ENCODE measurements at regions of chrX and their contacts with region 1.

Region 1: GRCh38 chrX:151396825-151397740 is at the start of gene VMA21:
- DNase-seq: peak; percentile 81
- H3K4me3 Mint-ChIP-seq: peak within 1 kb of the TSS; percentile 87
- H3K27ac Mint-ChIP-seq: peak within 1 kb of the TSS; percentile 96
- H3K4me1 Mint-ChIP-seq: peaks cover 48% of the 10 kb centered on the region
- H3K27me3 Mint-ChIP-seq: no peaks in the 10 kb centered on the region
- total RNA-seq, gene VMA21: 36.5 to 39.7 TPM

Region 2: DNA sequence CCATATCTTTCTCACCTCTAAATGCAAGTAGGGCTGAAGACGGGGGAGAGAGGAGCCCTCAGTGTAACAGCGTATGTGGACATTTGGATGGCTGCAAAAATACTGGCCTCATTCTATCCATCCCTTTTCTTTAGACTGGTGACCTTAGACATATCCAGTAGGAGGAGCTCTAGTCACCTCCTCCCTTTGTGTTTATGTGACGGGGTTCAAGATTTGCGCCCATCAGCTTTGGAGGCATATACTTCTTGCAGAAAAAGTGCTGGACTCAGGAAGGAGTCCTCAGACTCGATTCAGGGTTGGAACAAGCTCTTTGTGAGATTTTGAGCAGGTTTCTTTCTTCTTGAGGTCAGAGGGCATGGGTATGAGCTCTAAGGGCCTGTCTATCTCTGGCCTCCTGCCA is 947.8 kb before region 1 on chrX:
- CTCF ChIA-PET with region 1: no interaction called
- intact Hi-C with region 1: loop called (anchors 10 kb)
- DNase-seq: no peak
- H3K4me3 Mint-ChIP-seq: no peak overlapping the region
- H3K27ac Mint-ChIP-seq: no peak overlapping the region
- H3K4me1 Mint-ChIP-seq: peaks cover 13% of the 10 kb centered on the region
- H3K27me3 Mint-ChIP-seq: no peaks in the 10 kb centered on the region

Region 3: DNA sequence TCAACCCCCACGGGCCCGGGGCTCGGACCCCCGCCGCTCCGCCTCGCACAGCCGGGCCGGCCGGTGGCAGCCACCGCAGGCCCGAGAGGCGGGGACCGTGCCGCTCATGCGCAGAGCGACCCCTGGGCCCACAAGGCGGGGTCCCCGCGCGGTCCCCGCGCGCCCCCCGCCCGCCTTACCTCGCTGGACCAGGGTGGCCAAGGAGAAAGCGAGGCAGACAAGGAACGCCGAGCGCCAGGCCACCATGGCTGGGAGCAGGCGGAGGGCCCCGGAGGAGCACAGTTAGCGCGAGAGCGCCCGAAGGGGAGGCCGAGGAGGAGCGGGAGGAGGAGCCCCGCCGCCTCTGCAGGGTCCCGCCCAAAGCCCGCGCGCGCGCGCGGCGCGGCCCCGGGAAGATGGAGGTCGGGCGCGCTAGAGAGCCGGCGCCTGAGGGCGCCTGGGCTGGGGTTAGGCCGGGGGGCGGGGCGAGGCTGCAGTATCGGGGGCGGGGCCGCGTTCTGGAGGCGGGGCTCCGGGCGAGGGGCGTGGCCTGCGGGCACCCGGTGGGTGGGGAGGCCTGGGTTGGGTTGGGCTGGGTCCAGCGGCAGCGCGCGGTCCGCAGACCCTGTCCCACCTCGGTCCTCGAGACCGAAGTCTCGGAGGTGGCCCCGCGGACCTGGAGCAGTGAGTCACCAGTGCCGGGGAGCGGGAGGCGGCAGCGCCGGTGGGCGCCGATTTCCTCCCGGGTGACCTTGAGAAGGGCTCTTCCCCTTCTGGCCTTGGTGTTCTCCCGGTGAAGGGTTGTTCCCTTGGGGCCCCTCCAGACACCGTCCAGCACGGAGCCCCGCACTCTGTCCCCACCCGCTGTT is 498.5 kb before region 1 on chrX and contains the start of gene CD99L2:
- CTCF ChIA-PET with region 1: no interaction called
- intact Hi-C with region 1: loop called (anchors 2 kb)
- DNase-seq: peak; percentile 88
- H3K4me3 Mint-ChIP-seq: peak within 1 kb of the TSS; percentile 75
- H3K27ac Mint-ChIP-seq: peak within 1 kb of the TSS; percentile 50
- H3K4me1 Mint-ChIP-seq: peaks cover 10% of the 10 kb centered on the region
- H3K27me3 Mint-ChIP-seq: no peaks in the 10 kb centered on the region
- total RNA-seq, gene CD99L2: 11.3 to 11.7 TPM

Region 4: DNA sequence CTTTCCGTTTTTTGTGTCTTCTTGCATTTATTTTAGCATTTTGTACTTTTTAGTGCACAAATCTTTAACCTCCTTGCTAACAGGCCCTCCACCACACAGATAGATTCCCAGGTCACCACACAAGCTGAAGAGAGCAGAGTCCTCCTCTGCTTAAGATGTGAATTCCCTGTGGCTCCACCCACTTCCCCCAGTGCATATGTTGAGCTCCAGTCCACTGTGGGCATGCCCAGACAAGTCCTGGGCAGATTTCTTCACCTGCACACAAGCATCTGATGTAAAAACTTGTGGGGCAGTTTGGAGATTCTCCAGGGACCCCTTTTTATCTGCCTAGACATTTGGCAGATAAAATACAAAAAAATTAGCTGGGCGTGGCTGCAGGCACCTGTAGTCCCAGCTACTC is 146.6 kb after region 1 on chrX:
- CTCF ChIA-PET with region 1: no interaction called
- intact Hi-C with region 1: loop called (anchors 10 kb)
- DNase-seq: peak; percentile 17
- H3K4me3 Mint-ChIP-seq: no peak overlapping the region
- H3K27ac Mint-ChIP-seq: no peak overlapping the region
- H3K4me1 Mint-ChIP-seq: peaks cover 2% of the 10 kb centered on the region
- H3K27me3 Mint-ChIP-seq: no peaks in the 10 kb centered on the region

Region 5: DNA sequence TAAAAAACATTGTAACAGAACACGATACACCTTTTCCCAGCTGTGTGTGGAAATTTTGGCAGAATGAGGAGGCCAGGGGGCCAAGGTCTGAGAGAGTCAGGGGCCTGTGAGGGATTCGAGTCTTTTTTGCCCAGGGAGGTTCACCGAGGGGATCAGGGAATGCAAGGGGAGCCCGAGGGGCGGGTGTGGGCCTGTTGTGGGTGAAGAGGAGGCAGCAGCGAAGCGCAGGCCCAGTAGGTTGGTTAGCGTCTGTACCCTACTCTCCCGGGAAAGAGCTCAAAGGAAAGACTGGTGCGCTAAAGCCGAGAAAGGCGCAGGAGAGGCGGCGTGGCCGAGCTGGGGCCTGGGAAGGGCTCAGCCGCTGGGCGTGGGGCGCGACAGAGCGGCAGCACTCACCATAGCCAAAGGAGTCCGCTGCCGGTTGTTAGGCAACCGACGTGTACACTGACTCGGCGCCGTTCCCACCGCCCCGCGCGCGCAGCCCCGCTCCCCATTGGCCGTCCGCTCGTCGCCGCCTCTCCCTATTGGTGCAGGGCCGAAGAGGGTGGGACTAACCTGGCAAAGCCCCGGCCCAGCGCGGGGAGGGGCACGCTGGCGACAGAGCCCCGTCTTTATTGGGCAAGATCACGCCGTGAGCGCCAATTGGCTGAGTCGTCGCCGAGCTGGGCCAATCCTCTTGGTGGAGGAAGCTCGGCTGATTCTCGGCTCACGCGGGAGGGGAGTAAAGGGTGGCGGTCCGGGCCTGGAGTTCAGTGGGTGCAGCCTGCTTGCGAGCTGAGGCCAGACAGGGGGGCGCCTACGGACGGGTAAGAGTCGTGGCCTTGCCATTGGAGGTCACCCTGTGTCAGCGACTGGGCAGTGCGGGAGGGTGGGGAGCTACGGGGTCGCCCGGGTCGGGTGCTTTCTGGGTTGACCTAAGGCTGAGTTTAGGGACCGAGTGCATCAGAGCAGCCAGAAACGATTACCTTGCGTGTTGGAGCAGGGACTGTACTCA is 1433.5 kb after region 1 on chrX and contains the starts of genes CETN2 and NSDHL:
- CTCF ChIA-PET with region 1: no interaction called
- intact Hi-C with region 1: loop called (anchors 2 kb)
- DNase-seq: peak; percentile 95
- H3K4me3 Mint-ChIP-seq: peak within 1 kb of the TSS; percentile 88
- H3K27ac Mint-ChIP-seq: peak within 1 kb of the TSS; percentile 81
- H3K4me1 Mint-ChIP-seq: peaks cover 26% of the 10 kb centered on the region
- H3K27me3 Mint-ChIP-seq: no peaks in the 10 kb centered on the region
- total RNA-seq, gene CETN2: 10.1 to 11.9 TPM
- total RNA-seq, gene NSDHL: 13.3 to 16.2 TPM